ENCODE measurements at regions of chr17 and their contacts with region 1.

Region 1: DNA sequence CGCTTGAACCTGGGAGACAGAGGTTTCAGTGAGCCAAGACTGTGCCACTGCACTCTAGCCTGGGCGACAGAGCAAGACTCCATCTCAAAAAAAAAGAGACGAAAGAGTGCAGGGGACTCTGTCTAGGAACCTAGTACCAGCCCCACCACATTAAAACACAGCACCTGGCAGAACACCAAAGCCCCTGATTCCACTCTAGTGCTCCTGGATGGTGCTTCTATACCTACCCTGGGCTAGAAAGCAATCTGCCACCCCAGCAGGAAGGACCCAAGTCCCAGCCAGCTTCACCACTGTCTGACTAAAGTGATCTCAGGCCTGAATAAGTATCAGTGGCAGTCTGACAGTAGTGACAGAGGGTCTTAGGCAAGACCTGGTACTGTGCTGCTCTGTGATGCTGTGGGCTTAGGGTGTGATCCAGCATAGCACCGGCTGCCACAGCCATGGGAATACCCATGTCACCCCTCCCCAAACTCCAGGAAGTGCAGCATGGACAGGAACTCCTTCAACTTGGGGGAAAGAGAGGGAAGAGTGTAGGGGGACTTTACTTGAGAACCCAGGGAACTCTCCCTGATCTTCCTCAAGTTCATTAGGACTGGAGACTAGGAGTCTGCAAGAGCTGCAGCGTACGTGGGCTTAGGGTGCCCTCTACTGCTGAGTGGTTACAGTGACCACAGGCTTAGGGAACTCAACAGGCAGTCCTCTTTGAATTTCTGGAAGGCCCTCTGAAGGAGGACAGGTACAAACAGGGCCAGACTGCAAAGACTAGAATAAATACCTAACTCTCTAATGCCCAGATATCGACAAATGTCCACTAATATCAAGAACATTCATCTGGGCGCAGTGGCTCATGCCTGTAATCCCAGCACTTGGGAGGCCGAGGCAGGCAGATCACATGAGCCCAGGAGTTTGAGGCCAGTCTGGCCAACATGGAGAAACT is 30.0 kb upstream of the RNF43 start:
- DNase-seq: peak; percentile 70 to 83
- H3K4me3 ChIP-seq: no peak overlapping the region
- H3K27ac ChIP-seq: no peak overlapping the region
- H3K4me1 ChIP-seq: peaks cover 3 to 9% (median 4%) of the 10 kb centered on the region in 4 experiments; a peak in 6 of 7 replicates
- H3K27me3 ChIP-seq: no peaks in the 10 kb centered on the region
- CTCF ChIP-seq: peak; percentile 81 to 96 (median 96)
- EP300 ChIP-seq: 0 out of 3 replicates have a peak, but pooled peaks of 1 of the 2 experiments have one; percentile 5
- POLR2A ChIP-seq: no peak
- RAD21 ChIP-seq: peak; percentile 99

Region 2: GRCh38 chr17:58277107-58277801 is 170.1 kb before region 1 on chr17:
- CTCF ChIA-PET with region 1: interaction called, 18 read pairs
- POLR2A ChIA-PET with region 1: no interaction called
- DNase-seq: no peak
- H3K4me3 ChIP-seq: no peak overlapping the region
- H3K27ac ChIP-seq: no peak overlapping the region
- H3K4me1 ChIP-seq: peaks cover 0 to 3% (median 0%) of the 10 kb centered on the region in 4 experiments; a peak in 1 of 7 replicates
- H3K27me3 ChIP-seq: peaks cover 0 to 8% (median 0%) of the 10 kb centered on the region in 4 experiments; a peak in 3 of 7 replicates
- CTCF ChIP-seq: peak in 2 of 3 experiments; percentile 54 to 67; a peak in 3 of 4 replicates
- EP300 ChIP-seq: no peak
- POLR2A ChIP-seq: no peak
- RAD21 ChIP-seq: peak; percentile 65 to 73

Measured in H1 (cell line).